ENCODE measurements at regions of chr15 and their contacts with region 1.

Region 1: GRCh38 chr15:35254062-35254461 is 169.0 kb upstream of the NANOGP8 start:
- DNase-seq: no peak
- H3K4me3 ChIP-seq: no peak overlapping the region
- H3K27ac ChIP-seq: no peak overlapping the region
- H3K4me1 ChIP-seq: no peaks in the 10 kb centered on the region
- H3K27me3 ChIP-seq: no peaks in the 10 kb centered on the region
- CTCF ChIP-seq: no peak

Region 2: DNA sequence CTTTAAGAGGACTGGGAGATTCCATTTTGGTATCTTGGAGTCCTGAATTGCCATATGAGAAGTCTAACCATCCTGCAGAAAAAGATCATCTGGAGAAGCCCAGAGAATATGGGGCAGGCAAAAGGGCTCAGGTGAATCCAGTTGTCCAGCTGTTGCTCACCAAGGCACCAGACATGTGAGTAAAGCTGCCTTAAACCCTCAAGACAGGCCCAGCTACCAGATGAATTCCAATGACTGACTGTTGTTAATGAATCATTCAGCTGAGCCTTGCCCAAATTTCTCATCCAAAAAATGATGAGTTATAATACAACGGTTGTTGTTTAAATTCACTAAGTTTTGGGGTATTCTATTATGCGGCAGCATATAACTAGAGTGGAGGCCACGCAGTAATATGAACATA is 146.9 kb before region 1 on chr15:
- CTCF ChIA-PET with region 1: no interaction called
- POLR2A ChIA-PET with region 1: no interaction called
- intact Hi-C with region 1: no loop called
- DNase-seq: no peak
- H3K4me3 ChIP-seq: no peak overlapping the region
- H3K27ac ChIP-seq: no peak overlapping the region
- H3K4me1 ChIP-seq: no peaks in the 10 kb centered on the region
- H3K27me3 ChIP-seq: no peaks in the 10 kb centered on the region
- CTCF ChIP-seq: no peak

Region 3: DNA sequence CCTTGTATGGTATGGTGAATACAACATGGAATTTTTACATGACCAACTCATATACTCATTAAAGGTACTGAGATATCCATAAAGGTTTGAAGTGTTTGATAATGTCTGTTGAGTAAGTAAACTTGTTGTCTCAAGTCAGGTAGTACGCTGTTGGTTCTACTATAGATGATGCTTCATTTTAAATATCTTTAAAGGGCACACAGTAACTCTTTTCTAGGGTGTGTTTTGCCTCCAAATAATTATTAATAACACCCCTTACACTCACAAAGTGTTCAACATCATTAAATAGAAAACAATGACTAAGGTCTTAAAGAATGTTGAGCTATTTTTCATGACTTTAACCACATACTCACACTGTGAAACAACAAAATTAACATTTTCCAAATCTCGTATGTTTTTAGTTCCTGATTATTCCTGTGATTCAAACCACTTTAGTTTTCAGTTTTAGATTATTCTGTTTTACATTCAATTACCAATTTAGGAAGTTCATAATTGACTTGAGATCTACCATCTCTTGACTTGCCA is 51.0 kb after region 1 on chr15:
- CTCF ChIA-PET with region 1: no interaction called
- POLR2A ChIA-PET with region 1: interaction called, 11 read pairs
- intact Hi-C with region 1: no loop called
- DNase-seq: peak in 1 of 2 experiments; percentile 35
- H3K4me3 ChIP-seq: no peak overlapping the region
- H3K27ac ChIP-seq: no peak overlapping the region
- H3K4me1 ChIP-seq: peaks cover 27% of the 10 kb centered on the region
- H3K27me3 ChIP-seq: no peaks in the 10 kb centered on the region
- CTCF ChIP-seq: no peak